ENCODE measurements at regions of chr13 and their contacts with region 1.

Region 1: DNA sequence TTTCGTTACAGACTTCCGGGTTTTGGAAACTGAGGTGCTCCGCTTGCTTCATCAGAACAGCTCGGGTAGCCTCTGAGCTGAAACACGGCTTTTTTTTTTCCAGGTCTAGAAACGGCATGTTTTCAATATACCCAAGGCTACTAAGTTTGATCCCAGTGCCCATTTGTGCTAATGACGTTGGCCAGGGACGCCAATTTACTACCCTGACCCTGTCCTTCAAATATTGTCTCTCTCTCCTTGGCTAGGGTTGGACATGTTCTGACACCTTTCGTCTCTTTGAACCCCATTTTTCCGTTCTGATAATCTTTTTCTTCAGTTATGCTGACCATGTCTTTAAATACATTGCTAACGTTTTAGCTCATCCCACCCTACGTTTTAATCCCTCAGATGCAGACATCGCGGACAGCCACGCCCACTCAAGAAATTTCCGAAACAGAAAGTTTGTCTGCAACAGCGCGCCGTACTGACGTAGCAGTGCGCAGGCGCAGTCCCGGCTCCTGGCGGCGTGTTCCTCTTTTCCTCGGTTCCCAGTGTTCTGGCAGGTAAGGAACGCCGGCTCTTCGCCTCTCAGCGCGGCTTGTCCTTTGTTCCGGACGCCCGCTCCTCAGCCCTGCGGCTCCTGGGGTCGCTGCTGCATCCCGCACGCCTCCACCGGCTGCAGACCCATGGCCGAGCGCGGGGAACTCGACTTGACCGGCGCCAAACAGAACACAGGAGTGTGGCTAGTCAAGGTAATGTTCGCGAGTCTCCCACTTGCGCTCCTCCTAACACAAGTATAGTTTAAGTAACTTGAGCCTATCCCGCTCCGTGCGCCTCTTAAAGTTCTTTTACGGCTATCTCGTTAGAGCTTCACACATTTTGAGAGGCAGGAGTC is at the start of gene GTF2F2:
- DNase-seq: peak; percentile 85
- H3K4me3 Mint-ChIP-seq: no peak within 1 kb of the TSS
- H3K27ac Mint-ChIP-seq: no peak within 1 kb of the TSS
- H3K4me1 Mint-ChIP-seq: peaks cover 13% of the 10 kb centered on the region
- H3K27me3 Mint-ChIP-seq: no peaks in the 10 kb centered on the region
- total RNA-seq, gene GTF2F2: 30.1 and 30.8 TPM in 2 replicates

Region 2: DNA sequence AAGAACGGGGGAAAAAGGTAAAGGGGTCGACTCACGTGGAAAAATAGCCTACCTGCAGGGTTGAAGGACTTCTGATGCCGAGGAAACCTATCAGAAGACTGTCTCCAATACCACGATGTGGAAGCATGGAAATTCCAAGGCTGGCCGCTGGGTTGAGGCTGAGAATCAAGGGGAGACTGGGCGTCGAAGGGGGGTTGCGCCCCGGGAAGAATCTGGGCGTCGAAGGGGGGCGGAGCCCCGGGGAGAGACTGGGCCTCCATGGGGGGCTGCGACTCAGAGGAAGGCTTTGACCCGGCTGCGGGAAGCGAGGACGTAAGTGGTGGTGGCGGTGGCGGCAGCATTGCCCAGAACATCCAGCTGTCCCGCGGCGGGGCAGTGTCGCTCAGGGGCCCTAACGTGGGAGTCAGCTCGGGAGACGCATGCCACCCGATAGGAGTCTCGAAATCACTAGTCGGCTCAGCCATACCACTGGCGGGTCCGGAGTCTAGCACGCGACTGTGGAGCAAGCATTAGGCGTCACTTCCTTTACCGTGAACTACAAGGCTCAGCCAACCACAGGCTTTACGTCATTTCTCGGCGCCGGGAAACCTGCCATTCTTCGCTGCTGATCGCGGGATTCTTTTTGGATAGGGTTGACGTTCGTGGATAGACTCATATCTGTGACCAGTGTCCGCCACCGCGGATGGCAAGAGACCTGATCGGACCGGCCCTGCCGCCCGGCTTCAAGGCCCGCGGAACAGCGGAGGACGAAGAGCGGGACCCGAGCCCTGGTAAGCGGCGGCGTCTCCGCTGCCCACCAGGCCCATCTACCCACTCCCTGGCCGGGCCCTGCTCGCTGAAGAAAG is 131.0 kb before region 1 on chr13 and contains the starts of genes GPALPP1 and NUFIP1:
- intact Hi-C with region 1: loop called (anchors 2 kb)
- DNase-seq: peak; percentile 90
- H3K4me3 Mint-ChIP-seq: peak within 1 kb of the TSS; percentile 91
- H3K27ac Mint-ChIP-seq: peak within 1 kb of the TSS; percentile 91
- H3K4me1 Mint-ChIP-seq: peaks cover 43% of the 10 kb centered on the region
- H3K27me3 Mint-ChIP-seq: no peaks in the 10 kb centered on the region
- total RNA-seq, gene GPALPP1: 29.8 and 33.5 TPM in 2 replicates
- total RNA-seq, gene NUFIP1: 12.2 and 13.5 TPM in 2 replicates

Region 3: GRCh38 chr13:45047394-45048310 is 72.6 kb before region 1 on chr13:
- intact Hi-C with region 1: loop called (anchors 1 kb)
- DNase-seq: peak; percentile 61
- H3K4me3 Mint-ChIP-seq: peak overlapping the region; percentile 76
- H3K27ac Mint-ChIP-seq: no peak overlapping the region
- H3K4me1 Mint-ChIP-seq: peaks cover 16% of the 10 kb centered on the region
- H3K27me3 Mint-ChIP-seq: peaks cover 33% of the 10 kb centered on the region

Region 4: GRCh38 chr13:45055198-45055901 is 64.9 kb before region 1 on chr13:
- intact Hi-C with region 1: loop called (anchors 1 kb)
- DNase-seq: peak; percentile 3
- H3K4me3 Mint-ChIP-seq: no peak overlapping the region
- H3K27ac Mint-ChIP-seq: peak overlapping the region; percentile 4
- H3K4me1 Mint-ChIP-seq: peaks cover 20% of the 10 kb centered on the region
- H3K27me3 Mint-ChIP-seq: peaks cover 51% of the 10 kb centered on the region

Region 5: DNA sequence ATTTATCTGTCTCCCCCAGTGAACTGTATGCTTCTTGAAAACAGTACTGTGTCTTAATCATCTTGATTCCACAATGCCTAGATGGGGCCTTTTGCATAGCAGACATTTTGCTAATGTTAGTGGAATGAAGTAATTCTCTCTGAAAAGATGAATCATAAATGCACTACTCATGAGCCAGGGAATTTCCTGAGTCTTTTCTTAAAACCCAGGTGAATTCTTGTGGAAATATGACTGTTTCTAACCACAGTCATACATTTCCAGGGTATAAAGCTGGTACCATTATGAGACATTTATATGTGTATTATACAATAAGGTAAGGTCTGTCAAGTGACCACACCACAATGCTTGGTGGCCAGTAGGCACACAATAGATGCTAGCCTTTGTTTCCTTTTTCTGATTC is 86.1 kb after region 1 on chr13:
- intact Hi-C with region 1: loop called (anchors 1 kb)
- DNase-seq: no peak
- H3K4me3 Mint-ChIP-seq: no peak overlapping the region
- H3K27ac Mint-ChIP-seq: peak overlapping the region; percentile 23
- H3K4me1 Mint-ChIP-seq: peaks cover 15% of the 10 kb centered on the region
- H3K27me3 Mint-ChIP-seq: no peaks in the 10 kb centered on the region

Region 6: DNA sequence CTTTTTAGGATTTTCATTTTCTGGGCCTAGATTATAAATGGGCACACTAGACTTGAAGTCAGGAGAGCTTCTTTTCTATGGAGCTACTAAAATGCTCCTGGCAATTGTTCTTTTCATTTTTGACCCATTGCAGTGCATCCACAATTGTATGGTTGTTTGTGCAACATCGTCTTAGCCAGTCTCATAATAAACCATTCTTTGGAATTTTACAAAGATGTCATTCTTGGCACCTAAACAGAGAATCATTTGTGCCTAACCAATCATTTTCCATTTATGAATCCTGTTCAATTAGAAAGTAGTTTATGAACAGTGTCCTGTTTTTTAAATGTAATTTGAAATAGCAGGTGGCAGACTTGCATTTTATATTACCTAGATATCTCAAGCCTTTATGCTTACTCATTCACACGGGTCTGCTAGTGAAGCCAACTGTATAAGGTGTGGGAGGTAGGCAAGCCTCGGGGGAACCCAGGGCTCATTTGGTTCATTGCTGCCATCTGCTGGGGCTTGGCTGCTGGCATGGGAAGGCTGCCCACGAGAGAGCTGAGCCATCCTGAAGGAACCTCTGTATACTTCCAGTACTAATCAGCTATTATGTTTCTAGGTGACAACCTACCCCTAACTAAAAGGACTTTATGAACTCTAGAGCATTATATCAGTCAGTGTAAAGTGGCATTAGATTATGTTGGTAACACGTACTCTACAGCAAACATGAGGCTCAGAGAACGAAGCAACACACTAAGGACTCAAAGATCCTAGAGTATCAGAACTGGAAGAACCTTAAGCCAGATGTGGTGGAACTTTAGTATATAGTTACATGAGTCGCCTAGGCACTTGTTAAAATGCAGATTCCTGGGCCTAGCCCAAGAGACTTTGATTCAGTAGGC is 160.8 kb after region 1 on chr13:
- intact Hi-C with region 1: loop called (anchors 2 kb)
- DNase-seq: peak; percentile 3
- H3K4me3 Mint-ChIP-seq: no peak overlapping the region
- H3K27ac Mint-ChIP-seq: no peak overlapping the region
- H3K4me1 Mint-ChIP-seq: peaks cover 15% of the 10 kb centered on the region
- H3K27me3 Mint-ChIP-seq: no peaks in the 10 kb centered on the region

Region 7: GRCh38 chr13:45310341-45311125 is 190.3 kb after region 1 on chr13:
- intact Hi-C with region 1: loop called (anchors 1 kb)
- DNase-seq: no peak
- H3K4me3 Mint-ChIP-seq: peak overlapping the region; percentile 78
- H3K27ac Mint-ChIP-seq: peak overlapping the region; percentile 44
- H3K4me1 Mint-ChIP-seq: peaks cover 18% of the 10 kb centered on the region
- H3K27me3 Mint-ChIP-seq: peaks cover 16% of the 10 kb centered on the region

Measured in activated T-helper 1 cell treated with anti-CD3 and anti-CD28 coated beads, Interleukin-12 subunit alpha, Interleukin-12 subunit beta, Interleukin-2, Interleukin-4 antibody, amounts not matched to agents 30 ng/mL and 10 ng/mL and 1 ng/mL, durations not matched to agents 14 hours and 24 hours and 36 hours (primary cell).